Activated CD4-positive, alpha-beta memory T cell treated with anti-CD3 and anti-CD28 coated beads for 36 hours (primary cell): ENCODE measurements at regions of chr4 and their contacts with region 1.

Region 1: DNA sequence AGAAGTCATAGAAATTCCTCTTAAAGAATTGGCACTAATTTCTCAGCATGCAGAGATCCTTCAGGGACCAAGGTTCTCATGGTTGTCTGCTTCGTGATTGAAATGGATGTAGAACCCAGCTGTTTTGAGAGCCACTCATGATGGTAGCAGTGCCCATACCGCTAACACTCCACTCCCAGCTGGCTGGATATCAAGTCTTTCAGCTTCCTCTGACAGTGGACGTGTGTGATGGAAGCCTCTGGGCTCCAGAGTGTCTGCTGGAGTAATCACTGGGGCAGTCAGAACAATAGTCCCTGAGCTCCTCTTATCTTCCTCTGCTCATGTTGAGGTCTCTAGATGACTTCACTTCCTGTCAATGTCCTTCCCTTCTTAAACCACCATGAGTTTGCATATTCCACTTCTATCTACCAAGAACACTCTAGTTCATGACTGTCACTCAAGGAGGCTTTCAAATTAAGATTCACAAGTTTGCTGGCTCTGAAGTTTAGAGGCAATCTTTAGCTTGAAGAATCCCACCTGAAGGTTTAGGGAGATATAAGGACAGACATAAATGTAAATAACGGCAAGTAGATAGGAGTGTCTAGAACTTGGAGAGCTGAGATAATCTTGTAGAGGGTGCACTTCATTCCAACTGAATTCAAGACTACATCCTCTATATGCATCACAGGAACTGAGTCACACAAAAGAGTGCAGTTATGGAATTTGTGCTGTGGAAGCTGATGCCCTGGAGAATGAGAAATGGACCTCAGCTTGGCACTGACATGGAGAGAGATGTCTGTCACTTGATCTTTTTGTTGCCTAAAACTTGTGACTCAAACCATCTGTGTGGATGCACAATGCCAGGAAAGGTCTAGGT is 64.6 kb upstream of the WDR1 start:
- DNase-seq: peak; percentile 63
- H3K4me3 Mint-ChIP-seq: no peak overlapping the region
- H3K27ac Mint-ChIP-seq: peak overlapping the region; percentile 88
- H3K4me1 Mint-ChIP-seq: peaks cover 34% of the 10 kb centered on the region
- H3K27me3 Mint-ChIP-seq: no peaks in the 10 kb centered on the region

Region 2: DNA sequence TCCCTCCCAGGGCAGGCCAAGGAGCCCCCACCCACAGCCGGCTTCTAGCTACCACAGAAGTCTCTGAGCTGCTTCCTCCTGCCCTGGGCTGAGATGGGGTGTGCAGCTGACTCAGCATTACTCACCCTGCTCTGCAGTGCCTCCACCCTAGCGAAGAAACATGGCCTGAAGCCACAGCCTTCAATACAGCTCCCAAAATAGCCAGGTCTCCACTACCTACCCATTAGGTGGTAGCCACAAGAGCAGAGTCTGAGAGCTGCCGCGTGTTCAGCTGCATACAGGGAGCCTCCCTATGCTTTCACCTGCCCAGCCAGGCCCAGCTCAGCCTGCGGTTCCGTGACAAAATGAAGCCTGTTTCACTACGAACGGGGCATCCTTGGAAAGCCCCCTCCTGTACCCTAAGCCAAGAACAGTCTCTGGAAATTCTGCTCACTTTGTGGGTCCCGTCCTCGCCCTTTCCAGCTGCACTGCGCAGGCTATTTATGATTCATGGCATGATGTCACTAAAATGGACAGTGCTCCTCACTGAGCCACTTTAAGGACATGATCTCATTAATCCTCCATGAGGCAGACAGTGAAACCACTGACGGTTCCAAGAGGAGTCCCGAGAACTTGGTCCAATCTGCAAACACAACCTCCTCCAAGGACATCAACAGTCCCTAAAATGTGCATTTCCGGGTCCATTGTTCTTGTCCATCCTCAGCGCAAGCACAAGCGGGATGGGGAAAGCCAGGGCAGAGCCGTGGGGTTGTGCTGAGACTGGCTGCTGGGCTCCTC is 84.8 kb before region 1 on chr4:
- CTCF ChIA-PET with region 1: no interaction called
- POLR2A ChIA-PET with region 1: no interaction called
- intact Hi-C with region 1: loop called (anchors 1 kb)
- DNase-seq: peak; percentile 91
- H3K4me3 Mint-ChIP-seq: peak overlapping the region; percentile 37
- H3K27ac Mint-ChIP-seq: peak overlapping the region; percentile 92
- H3K4me1 Mint-ChIP-seq: peaks cover 95% of the 10 kb centered on the region
- H3K27me3 Mint-ChIP-seq: no peaks in the 10 kb centered on the region

Region 3: DNA sequence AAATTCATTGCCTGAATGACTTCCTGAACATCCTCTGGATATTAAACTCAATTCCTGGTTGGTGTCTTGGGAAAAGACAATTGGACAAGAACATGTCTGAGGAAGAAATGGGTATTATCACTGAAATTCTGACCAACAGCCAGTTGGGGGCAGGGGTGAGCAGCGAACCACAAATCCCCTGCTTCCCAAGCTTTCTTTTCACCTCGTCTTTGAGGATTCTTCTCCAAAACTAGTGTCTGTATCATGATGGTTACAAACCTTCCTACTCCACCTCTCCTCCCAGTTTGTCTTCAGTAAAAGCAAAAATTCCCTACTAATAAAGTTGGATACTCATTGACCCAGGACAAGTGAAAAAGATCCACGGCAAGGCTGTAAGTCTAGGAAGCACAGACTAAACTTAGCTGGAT is 16.3 kb before region 1 on chr4:
- CTCF ChIA-PET with region 1: interaction called, 8 read pairs
- POLR2A ChIA-PET with region 1: no interaction called
- intact Hi-C with region 1: loop called (anchors 1 kb)
- DNase-seq: no peak
- H3K4me3 Mint-ChIP-seq: no peak overlapping the region
- H3K27ac Mint-ChIP-seq: no peak overlapping the region
- H3K4me1 Mint-ChIP-seq: peaks cover 31% of the 10 kb centered on the region
- H3K27me3 Mint-ChIP-seq: no peaks in the 10 kb centered on the region

Region 4: GRCh38 chr4:10212400-10212799 is 31.2 kb after region 1 on chr4:
- CTCF ChIA-PET with region 1: no interaction called
- POLR2A ChIA-PET with region 1: no interaction called
- intact Hi-C with region 1: no loop called
- DNase-seq: no peak
- H3K4me3 Mint-ChIP-seq: no peak overlapping the region
- H3K27ac Mint-ChIP-seq: no peak overlapping the region
- H3K4me1 Mint-ChIP-seq: no peaks in the 10 kb centered on the region
- H3K27me3 Mint-ChIP-seq: no peaks in the 10 kb centered on the region

Region 5: GRCh38 chr4:10239982-10240654 is 59.0 kb after region 1 on chr4:
- CTCF ChIA-PET with region 1: no interaction called
- POLR2A ChIA-PET with region 1: no interaction called
- intact Hi-C with region 1: loop called (anchors 10 kb)
- DNase-seq: no peak
- H3K4me3 Mint-ChIP-seq: no peak overlapping the region
- H3K27ac Mint-ChIP-seq: no peak overlapping the region
- H3K4me1 Mint-ChIP-seq: no peaks in the 10 kb centered on the region
- H3K27me3 Mint-ChIP-seq: no peaks in the 10 kb centered on the region

Region 6: GRCh38 chr4:10461091-10461849 is 280.1 kb after region 1 on chr4:
- CTCF ChIA-PET with region 1: no interaction called
- POLR2A ChIA-PET with region 1: no interaction called
- intact Hi-C with region 1: loop called (anchors 1 kb)
- DNase-seq: peak; percentile 78
- H3K4me3 Mint-ChIP-seq: peak overlapping the region; percentile 72
- H3K27ac Mint-ChIP-seq: no peak overlapping the region
- H3K4me1 Mint-ChIP-seq: peaks cover 25% of the 10 kb centered on the region
- H3K27me3 Mint-ChIP-seq: peaks cover 33% of the 10 kb centered on the region

Region 7: DNA sequence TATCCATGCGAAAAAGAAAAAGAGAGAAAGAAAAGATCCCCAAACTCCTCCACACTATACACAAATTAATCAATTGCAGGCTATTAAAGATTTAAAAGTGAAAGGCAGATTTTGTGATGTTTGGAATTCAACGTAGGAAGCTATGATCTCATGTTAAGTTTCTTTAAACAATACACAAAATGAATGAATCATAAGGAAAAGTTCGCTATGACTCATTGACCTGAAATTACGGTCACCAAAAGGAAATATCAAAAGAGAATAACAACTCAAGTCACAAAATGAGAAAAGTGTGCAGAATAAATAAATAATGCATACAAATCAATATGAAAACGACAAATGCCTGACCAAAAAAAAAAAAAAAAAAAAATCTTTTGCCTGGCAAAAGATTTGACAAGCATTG is 474.8 kb after region 1 on chr4:
- CTCF ChIA-PET with region 1: no interaction called
- POLR2A ChIA-PET with region 1: no interaction called
- intact Hi-C with region 1: loop called (anchors 5 kb)
- DNase-seq: no peak
- H3K4me3 Mint-ChIP-seq: no peak overlapping the region
- H3K27ac Mint-ChIP-seq: no peak overlapping the region
- H3K4me1 Mint-ChIP-seq: peaks cover 24% of the 10 kb centered on the region
- H3K27me3 Mint-ChIP-seq: peaks cover 8% of the 10 kb centered on the region

Region 8: GRCh38 chr4:11480683-11481082 is 1299.5 kb after region 1 on chr4:
- CTCF ChIA-PET with region 1: no interaction called
- POLR2A ChIA-PET with region 1: no interaction called
- intact Hi-C with region 1: loop called (anchors 10 kb)
- DNase-seq: peak; percentile 29
- H3K4me3 Mint-ChIP-seq: no peak overlapping the region
- H3K27ac Mint-ChIP-seq: no peak overlapping the region
- H3K4me1 Mint-ChIP-seq: peaks cover 6% of the 10 kb centered on the region
- H3K27me3 Mint-ChIP-seq: peaks cover 2% of the 10 kb centered on the region